ENCODE measurements at regions of chr2 and their contacts with region 1.

Region 1: GRCh38 chr2:217713395-217714286 is 289.2 kb downstream of the TNS1 start:
- DNase-seq: peak; percentile 76
- CTCF ChIP-seq: peak; percentile 90

Region 2: DNA sequence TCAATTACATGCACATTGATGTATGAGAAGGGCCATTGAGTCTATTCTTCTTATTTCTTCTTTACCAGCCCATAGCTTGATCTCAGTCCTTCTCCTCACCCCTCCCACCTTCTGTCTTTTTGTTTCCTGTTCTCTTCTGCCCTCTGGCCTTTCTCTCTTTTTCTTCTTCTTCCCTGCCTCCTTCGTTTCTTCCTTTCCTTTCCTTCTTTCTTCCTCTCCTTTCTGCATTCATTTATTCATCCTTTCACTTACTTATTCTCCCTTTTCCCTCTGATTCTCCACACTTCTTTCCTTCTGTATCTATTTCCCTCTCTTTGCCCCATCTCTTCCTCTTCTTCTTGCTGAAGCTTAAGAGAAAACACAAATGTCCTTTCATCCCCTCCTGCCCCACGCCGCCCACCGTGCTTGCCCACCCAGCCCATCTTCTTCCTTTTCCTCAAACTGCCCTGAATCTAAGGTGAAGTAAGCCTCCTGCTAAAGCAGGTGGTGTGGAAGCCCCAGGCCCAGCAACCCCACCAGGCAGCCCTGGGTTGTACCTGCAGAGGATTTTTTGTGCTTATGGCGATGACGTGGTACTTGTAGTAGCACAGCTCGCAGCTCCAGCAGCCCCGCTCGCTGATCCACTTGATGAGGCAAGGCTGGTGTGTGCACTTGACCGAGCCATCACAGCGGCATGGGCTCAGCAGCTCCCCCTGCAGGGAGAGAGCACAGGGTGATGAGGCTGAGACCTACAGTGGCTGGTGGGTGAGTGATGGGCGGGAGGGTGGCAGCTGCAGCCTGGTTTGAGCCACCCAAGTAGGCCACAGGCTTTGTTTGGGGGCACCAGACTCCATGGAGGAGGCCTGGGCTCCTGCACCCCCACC is 1430.4 kb before region 1 on chr2:
- CTCF ChIA-PET with region 1: no interaction called
- POLR2A ChIA-PET with region 1: no interaction called
- DNase-seq: peak; percentile 59
- CTCF ChIP-seq: peak; percentile 44

Region 3: DNA sequence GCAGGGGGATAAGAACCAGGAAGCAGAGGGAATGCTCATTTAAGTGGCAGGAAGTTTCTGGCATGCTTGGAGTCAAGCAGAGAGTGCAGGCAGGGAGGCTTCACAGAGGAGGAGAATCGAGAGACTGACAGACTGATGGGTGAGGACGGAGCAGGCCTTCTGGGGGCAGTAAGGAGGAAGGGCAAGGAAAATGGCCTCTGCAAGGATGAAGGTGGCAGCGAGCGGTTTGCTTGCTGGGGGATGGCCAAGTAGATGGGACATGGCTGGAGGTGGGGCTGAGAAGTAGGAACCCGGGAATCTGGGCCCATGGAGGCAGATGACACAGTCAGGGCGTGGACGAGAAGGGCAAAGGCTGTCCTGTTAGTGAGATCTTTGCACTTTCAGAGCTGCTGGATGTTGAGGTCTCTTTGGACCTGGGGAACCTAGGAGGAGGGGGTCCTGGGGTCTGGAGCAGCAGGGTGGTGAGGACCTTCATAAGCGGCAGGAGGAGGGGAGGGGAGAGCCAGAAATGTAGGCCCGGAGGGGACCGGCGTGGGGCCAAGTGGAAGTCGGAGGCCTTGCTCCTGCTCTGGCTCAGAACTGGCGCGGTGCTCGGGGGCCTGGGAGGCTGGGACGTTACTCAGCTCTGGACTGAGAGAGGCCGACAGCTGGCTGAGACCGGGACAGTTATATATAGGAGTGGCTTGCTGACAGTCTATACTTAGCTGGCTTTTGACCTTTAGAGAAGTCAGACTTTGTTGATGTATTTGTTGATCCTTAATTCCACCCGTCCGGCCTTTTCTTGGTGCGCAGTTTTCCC is 1034.2 kb before region 1 on chr2:
- CTCF ChIA-PET with region 1: interaction called, 19 read pairs
- POLR2A ChIA-PET with region 1: no interaction called
- DNase-seq: no peak
- CTCF ChIP-seq: no peak

Region 4: GRCh38 chr2:216698895-216699294 is 1014.7 kb before region 1 on chr2:
- CTCF ChIA-PET with region 1: interaction called, 22 read pairs
- POLR2A ChIA-PET with region 1: no interaction called
- DNase-seq: peak; percentile 55
- CTCF ChIP-seq: peak; percentile 69

Region 5: GRCh38 chr2:217610401-217611075 is 103.1 kb before region 1 on chr2:
- CTCF ChIA-PET with region 1: no interaction called
- POLR2A ChIA-PET with region 1: no interaction called
- DNase-seq: peak; percentile 35
- CTCF ChIP-seq: no peak

Region 6: GRCh38 chr2:217695033-217695520 is 18.6 kb before region 1 on chr2:
- CTCF ChIA-PET with region 1: interaction called, 11 read pairs
- POLR2A ChIA-PET with region 1: no interaction called
- DNase-seq: no peak
- CTCF ChIP-seq: no peak

Region 7: DNA sequence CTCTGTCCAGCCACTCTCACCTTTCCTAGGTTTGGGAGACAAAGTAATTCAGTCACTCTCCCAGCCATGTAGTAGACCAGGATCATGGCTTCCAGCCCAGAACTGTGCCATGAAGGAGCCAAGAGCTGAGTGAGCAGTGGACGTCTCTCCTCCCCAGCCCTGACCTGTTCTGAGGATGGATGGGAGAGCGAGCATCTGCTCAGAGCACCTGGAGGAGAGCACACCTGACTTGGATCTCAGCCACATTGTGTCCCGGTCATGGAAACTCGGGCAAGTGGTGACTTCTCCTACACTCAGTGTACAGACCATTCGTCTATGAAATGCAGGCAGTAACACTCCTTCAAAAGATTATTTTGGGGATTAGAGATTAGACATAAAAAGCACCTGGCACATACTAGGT is 10.5 kb before region 1 on chr2:
- CTCF ChIA-PET with region 1: interaction called, 22 read pairs
- POLR2A ChIA-PET with region 1: no interaction called
- DNase-seq: no peak
- CTCF ChIP-seq: no peak